Testis (tissue), 5 donors: ENCODE measurements at regions of chr13 and their contacts with region 1.

Region 1: GRCh38 chr13:95403828-95404522 is 102.7 kb upstream of the ABCC4 start:
- DNase-seq: peak; percentile 93
- H3K4me3 ChIP-seq: peak overlapping the region; percentile 6 to 51
- H3K27ac ChIP-seq: no peak overlapping the region
- H3K4me1 ChIP-seq: peaks cover 3% of the 10 kb centered on the region
- H3K27me3 ChIP-seq: no peaks in the 10 kb centered on the region
- CTCF ChIP-seq: peak; percentile 90 to 96 (median 94)
- POLR2A ChIP-seq: no peak

Region 2: GRCh38 chr13:95185851-95186250 is 218.1 kb before region 1 on chr13:
- intact Hi-C with region 1: loop called (anchors 5 kb)
- DNase-seq: no peak
- H3K4me3 ChIP-seq: no peak overlapping the region
- H3K27ac ChIP-seq: no peak overlapping the region
- H3K4me1 ChIP-seq: peaks cover 12% of the 10 kb centered on the region
- H3K27me3 ChIP-seq: no peaks in the 10 kb centered on the region
- CTCF ChIP-seq: no peak
- POLR2A ChIP-seq: no peak

Region 3: GRCh38 chr13:95256086-95256485 is 147.9 kb before region 1 on chr13:
- intact Hi-C with region 1: no loop called
- DNase-seq: no peak
- H3K4me3 ChIP-seq: no peak overlapping the region
- H3K27ac ChIP-seq: no peak overlapping the region
- H3K4me1 ChIP-seq: no peaks in the 10 kb centered on the region
- H3K27me3 ChIP-seq: no peaks in the 10 kb centered on the region
- CTCF ChIP-seq: no peak
- POLR2A ChIP-seq: no peak

Region 4: GRCh38 chr13:95301183-95301967 is 102.6 kb before region 1 on chr13 and contains the start of gene ABCC4:
- intact Hi-C with region 1: loop called (anchors 10 kb)
- DNase-seq: peak; percentile 76
- H3K4me3 ChIP-seq: peak within 1 kb of the TSS; percentile 72 to 77
- H3K27ac ChIP-seq: peak within 1 kb of the TSS; percentile 18 to 72
- H3K4me1 ChIP-seq: no peaks in the 10 kb centered on the region
- H3K27me3 ChIP-seq: no peaks in the 10 kb centered on the region
- CTCF ChIP-seq: no peak
- POLR2A ChIP-seq: no peak
- total RNA-seq, gene ABCC4: 14.9 to 23.5 TPM